Left ventricle myocardium superior (tissue), 1 donor: ENCODE measurements at regions of chr10 and their contacts with region 1.

Region 1: GRCh38 chr10:101301249-101301711 is 52.7 kb upstream of the BTRC start:
- DNase-seq: peak; percentile 44
- ATAC-seq: peak; percentile 90

Region 2: GRCh38 chr10:101441541-101442455 is 140.5 kb after region 1 on chr10:
- intact Hi-C with region 1: loop called (anchors 10 kb)
- DNase-seq: no peak
- ATAC-seq: peak; percentile 84